Endothelial cell of umbilical vein (primary cell): ENCODE measurements at regions of chr9 and their contacts with region 1.

Region 1: DNA sequence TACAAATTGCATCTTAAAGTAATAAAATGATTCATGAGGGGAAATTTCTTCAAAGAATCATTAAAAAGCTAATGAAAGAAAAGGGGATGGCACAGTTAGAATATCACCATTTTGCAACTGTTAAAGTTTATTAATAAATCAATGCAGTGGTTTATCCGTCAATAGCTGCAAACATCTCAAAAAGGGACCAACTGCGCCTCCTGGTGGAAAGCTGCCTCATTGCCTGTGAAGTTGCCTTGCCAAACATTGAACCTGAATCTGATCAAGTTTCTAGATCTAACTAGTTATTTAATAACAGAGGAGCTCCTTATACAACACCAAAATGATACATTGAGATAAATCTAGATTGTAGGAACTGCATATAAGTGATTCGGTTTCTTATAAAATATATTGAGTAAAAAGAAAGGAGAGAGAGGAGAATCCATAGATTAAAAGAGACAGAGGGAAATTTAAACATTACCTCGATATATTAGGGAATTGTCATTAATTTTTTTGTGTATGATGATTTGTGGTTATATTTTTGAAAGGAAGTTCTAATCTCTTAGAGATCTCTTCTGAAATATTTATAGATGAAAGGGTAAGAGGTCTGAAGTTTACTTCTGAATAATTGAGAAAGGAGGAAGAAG is 6.9 kb upstream of the NDUFB6 start:
- DNase-seq: peak; percentile 67
- H3K4me3 ChIP-seq: no peak overlapping the region
- H3K27ac ChIP-seq: no peak overlapping the region
- H3K4me1 ChIP-seq: peaks cover 9% of the 10 kb centered on the region
- H3K27me3 ChIP-seq: peaks cover 8 to 10% of the 10 kb centered on the region in 2 experiments
- CTCF ChIP-seq: peak; percentile 85 to 89
- POLR2A ChIP-seq: no peak

Region 2: DNA sequence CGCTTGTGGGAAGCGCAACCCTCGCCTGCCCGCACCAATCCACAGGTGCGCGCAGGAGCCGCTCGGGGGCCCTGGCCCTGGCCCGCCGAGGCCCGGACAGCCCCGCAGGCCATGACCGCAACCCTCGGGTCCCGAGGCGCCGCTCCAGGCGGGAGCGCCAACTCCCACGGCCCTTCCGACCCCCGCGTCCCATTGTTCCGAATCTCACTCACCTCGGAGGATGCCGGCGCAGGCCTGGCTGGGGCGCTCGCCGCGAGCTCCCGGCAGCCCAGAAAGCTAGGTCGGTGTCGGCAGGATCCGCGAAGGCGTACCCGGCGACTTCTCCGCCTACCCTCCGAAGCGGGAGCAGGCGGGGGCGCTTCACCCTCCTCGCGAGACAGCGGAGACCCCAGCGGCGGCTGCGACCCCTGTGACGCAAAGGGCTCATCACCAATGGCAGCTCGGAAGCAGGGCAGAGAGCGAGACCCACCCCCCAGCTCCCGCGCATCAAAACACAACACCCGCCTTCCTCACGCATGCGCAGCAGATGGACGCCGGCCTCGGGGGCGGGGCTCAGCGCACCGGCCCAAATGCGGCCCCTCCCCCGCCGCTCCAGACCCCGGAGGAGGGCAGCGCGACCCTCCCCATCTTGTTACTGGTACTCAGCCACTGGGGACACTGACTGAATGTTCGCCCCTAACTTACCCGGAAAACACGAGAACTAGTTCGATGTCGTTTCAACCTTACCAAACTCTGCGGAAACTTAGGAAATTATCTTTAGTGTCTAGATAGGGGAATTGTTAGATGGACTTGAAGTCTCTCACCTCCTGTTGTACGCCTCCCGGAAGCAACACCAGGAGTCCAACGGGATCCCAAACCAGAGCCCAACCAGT is 29.0 kb before region 1 on chr9:
- CTCF ChIA-PET with region 1: interaction called, 11 read pairs
- POLR2A ChIA-PET with region 1: no interaction called
- dilution Hi-C with region 1: no loop called
- intact Hi-C with region 1: no loop called
- DNase-seq: peak; percentile 98
- H3K4me3 ChIP-seq: peak overlapping the region; percentile 71 to 88 (median 77)
- H3K27ac ChIP-seq: peak overlapping the region; percentile 92
- H3K4me1 ChIP-seq: peaks cover 17% of the 10 kb centered on the region
- H3K27me3 ChIP-seq: no peaks in the 10 kb centered on the region
- CTCF ChIP-seq: peak in 1 of 2 donors; percentile 22
- POLR2A ChIP-seq: no peak

Region 3: DNA sequence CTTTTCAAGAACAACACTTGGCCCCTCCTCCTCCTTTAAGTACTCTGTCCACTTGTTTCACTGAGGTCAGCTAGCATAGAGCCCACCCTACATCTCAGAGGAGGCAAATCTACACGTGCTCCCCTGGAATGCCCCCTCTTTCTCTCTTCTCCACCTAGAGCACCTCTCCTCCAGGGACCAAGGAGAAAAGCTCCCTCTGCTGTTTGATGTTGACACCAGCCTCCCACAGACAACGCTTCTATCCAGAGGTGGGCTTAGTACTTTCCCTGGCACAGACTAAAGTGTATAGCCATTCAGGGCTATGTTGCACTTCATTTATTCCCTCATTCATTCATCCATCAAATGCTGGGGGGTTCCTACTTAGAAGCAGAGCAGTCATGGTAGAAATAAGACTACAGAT is 123.8 kb after region 1 on chr9:
- CTCF ChIA-PET with region 1: interaction called, 12 read pairs
- POLR2A ChIA-PET with region 1: no interaction called
- dilution Hi-C with region 1: no loop called
- intact Hi-C with region 1: loop called (anchors 10 kb)
- DNase-seq: peak; percentile 9
- H3K4me3 ChIP-seq: no peak overlapping the region
- H3K27ac ChIP-seq: no peak overlapping the region
- H3K4me1 ChIP-seq: no peaks in the 10 kb centered on the region
- H3K27me3 ChIP-seq: no peaks in the 10 kb centered on the region
- CTCF ChIP-seq: peak in 1 of 2 donors; percentile 31
- POLR2A ChIP-seq: no peak

Region 4: GRCh38 chr9:32968101-32969011 is 388.5 kb after region 1 on chr9:
- CTCF ChIA-PET with region 1: interaction called, 705 read pairs
- POLR2A ChIA-PET with region 1: no interaction called
- dilution Hi-C with region 1: no loop called
- intact Hi-C with region 1: loop called (anchors 1 kb)
- DNase-seq: peak; percentile 72
- H3K4me3 ChIP-seq: no peak overlapping the region
- H3K27ac ChIP-seq: no peak overlapping the region
- H3K4me1 ChIP-seq: peaks cover 6% of the 10 kb centered on the region
- H3K27me3 ChIP-seq: no peaks in the 10 kb centered on the region
- CTCF ChIP-seq: peak; percentile 50 to 63
- POLR2A ChIP-seq: no peak

Region 5: GRCh38 chr9:33287087-33287490 is 707.3 kb after region 1 on chr9:
- CTCF ChIA-PET with region 1: no interaction called
- POLR2A ChIA-PET with region 1: no interaction called
- dilution Hi-C with region 1: no loop called
- intact Hi-C with region 1: no loop called
- DNase-seq: peak; percentile 71
- H3K4me3 ChIP-seq: no peak overlapping the region
- H3K27ac ChIP-seq: no peak overlapping the region
- H3K4me1 ChIP-seq: peaks cover 8% of the 10 kb centered on the region
- H3K27me3 ChIP-seq: no peaks in the 10 kb centered on the region
- CTCF ChIP-seq: peak; percentile 68 to 71
- POLR2A ChIP-seq: no peak